PC-9 (cell line): ENCODE measurements at regions of chr6 and their contacts with region 1.

Region 1: DNA sequence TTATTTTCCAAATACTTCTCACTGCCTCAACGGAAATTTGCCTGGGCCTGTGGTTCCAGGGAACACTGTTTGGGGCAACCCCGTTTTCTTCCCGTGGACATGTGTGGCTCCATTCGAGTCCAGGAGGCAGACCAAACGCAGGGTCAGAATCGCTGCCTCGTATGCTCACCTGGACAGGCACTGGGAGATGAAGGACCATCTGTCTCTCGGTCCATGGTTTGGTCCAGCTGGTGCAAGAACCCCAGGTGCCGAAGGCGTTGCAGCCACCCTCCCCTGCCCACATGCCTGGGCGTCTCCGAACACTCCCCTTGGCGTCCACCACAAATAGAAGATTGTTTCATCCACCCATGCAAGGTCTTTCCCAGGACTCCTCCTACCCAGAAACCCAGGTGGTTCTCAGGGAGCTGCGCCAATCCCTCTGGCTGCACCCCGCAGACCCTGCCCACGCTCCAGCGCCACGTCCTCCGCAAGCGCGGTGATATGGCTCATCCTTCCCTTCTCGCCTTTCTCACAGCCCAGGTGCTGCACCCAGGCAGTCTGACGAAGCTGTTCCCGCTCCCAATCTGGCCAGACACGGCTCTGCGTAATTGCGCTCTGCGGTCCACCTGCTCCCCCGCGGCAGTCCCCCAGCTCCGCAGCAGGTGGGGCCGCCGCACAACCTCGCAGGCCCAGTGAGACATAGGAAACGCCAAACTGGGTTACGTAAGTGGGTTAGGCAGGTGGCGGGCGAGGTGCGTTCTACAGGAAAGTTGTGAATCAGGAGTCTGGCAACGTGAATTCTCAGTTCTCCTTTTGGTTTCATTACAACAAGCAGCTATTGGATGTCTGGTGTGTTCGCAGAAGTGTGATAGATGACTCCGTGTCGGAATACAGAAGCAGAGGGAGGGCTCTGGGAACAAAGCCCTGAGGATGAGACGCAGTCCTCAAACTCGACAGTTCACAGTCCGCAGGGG is 146.2 kb upstream of the ECI2 start:
- DNase-seq: peak; percentile 70 to 80
- H3K4me3 ChIP-seq: peak overlapping the region; percentile 54
- H3K27ac ChIP-seq: no peak overlapping the region
- H3K4me1 ChIP-seq: peaks cover 17% of the 10 kb centered on the region
- H3K27me3 ChIP-seq: no peaks in the 10 kb centered on the region
- CTCF ChIP-seq: peak; percentile 51

Region 2: DNA sequence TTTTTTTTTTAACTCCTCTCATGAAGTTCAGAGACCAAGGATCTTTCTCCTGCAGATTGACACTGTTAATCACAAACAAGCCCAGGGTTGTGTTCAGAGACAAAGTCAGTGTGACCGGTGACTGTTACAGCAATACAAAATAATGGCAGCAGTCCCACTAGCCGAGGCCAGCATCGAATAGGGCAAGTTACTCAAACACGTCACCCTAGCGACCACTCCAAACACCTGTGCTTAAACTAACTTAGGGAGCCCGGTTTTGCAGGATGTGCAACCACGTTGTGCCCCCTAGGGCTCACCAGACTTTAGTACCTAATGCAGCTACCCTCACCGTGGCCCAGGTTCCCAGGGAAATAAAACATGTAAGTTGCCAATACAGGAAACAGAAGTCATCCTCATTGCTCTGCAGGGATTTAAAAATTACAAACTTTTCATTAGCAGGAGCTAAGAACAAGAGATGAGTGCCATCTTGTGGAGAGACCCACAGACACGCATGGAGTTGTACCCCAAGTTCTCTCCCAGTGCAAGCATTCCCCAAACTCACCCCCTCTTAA is 394.4 kb before region 1 on chr6:
- CTCF ChIA-PET with region 1: no interaction called
- POLR2A ChIA-PET with region 1: no interaction called
- intact Hi-C with region 1: no loop called
- DNase-seq: peak; percentile 28 to 69
- H3K4me3 ChIP-seq: no peak overlapping the region
- H3K27ac ChIP-seq: no peak overlapping the region
- H3K4me1 ChIP-seq: peaks cover 40% of the 10 kb centered on the region
- H3K27me3 ChIP-seq: no peaks in the 10 kb centered on the region
- CTCF ChIP-seq: 0 out of 2 replicates have a peak, but pooled peaks have one; percentile 37

Region 3: GRCh38 chr6:4256965-4257364 is 24.7 kb before region 1 on chr6:
- CTCF ChIA-PET with region 1: no interaction called
- POLR2A ChIA-PET with region 1: no interaction called
- intact Hi-C with region 1: loop called (anchors 1 kb)
- DNase-seq: peak in 1 of 2 experiments; percentile 31
- H3K4me3 ChIP-seq: no peak overlapping the region
- H3K27ac ChIP-seq: no peak overlapping the region
- H3K4me1 ChIP-seq: no peaks in the 10 kb centered on the region
- H3K27me3 ChIP-seq: no peaks in the 10 kb centered on the region
- CTCF ChIP-seq: no peak

Region 4: GRCh38 chr6:4351520-4352315 is 70.1 kb after region 1 on chr6:
- CTCF ChIA-PET with region 1: no interaction called
- POLR2A ChIA-PET with region 1: interaction called, 12 read pairs
- intact Hi-C with region 1: no loop called
- DNase-seq: peak; percentile 69 to 77
- H3K4me3 ChIP-seq: peak overlapping the region; percentile 56; the same call in 1 of the 2 replicates
- H3K27ac ChIP-seq: peak overlapping the region; percentile 78
- H3K4me1 ChIP-seq: peaks cover 30% of the 10 kb centered on the region
- H3K27me3 ChIP-seq: no peaks in the 10 kb centered on the region
- CTCF ChIP-seq: no peak

Region 5: GRCh38 chr6:4647414-4648365 is 366.1 kb after region 1 on chr6:
- CTCF ChIA-PET with region 1: no interaction called
- POLR2A ChIA-PET with region 1: no interaction called
- intact Hi-C with region 1: no loop called
- DNase-seq: peak; percentile 40 to 69
- H3K4me3 ChIP-seq: peak overlapping the region; percentile 46
- H3K27ac ChIP-seq: no peak overlapping the region
- H3K4me1 ChIP-seq: peaks cover 14% of the 10 kb centered on the region; the same call in 1 of the 2 replicates
- H3K27me3 ChIP-seq: no peaks in the 10 kb centered on the region
- CTCF ChIP-seq: no peak

Region 6: DNA sequence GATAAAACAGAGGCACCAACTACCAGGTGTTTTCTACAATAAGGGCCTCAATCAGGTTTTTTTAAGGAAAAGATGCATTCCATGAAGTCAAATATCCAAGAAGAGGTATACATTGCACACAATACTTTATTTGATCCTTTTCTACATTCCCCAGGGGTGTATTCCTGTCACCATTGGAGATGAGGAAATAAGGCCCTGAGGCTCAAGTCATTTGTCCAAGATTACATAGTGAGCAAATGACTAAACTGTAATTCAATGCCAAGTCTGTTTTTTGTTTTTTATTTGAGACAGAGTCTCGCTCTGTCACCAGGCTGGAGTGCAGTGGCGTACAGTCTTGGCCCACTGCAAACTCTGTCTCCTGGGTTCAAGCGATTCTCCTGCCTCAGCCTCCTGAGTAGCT is 425.4 kb after region 1 on chr6:
- CTCF ChIA-PET with region 1: no interaction called
- POLR2A ChIA-PET with region 1: no interaction called
- intact Hi-C with region 1: loop called (anchors 1 kb)
- DNase-seq: peak; percentile 56 to 88
- H3K4me3 ChIP-seq: no peak overlapping the region
- H3K27ac ChIP-seq: peak overlapping the region; percentile 34; the same call in 1 of the 2 replicates
- H3K4me1 ChIP-seq: peaks cover 11% of the 10 kb centered on the region
- H3K27me3 ChIP-seq: no peaks in the 10 kb centered on the region
- CTCF ChIP-seq: no peak

Region 7: DNA sequence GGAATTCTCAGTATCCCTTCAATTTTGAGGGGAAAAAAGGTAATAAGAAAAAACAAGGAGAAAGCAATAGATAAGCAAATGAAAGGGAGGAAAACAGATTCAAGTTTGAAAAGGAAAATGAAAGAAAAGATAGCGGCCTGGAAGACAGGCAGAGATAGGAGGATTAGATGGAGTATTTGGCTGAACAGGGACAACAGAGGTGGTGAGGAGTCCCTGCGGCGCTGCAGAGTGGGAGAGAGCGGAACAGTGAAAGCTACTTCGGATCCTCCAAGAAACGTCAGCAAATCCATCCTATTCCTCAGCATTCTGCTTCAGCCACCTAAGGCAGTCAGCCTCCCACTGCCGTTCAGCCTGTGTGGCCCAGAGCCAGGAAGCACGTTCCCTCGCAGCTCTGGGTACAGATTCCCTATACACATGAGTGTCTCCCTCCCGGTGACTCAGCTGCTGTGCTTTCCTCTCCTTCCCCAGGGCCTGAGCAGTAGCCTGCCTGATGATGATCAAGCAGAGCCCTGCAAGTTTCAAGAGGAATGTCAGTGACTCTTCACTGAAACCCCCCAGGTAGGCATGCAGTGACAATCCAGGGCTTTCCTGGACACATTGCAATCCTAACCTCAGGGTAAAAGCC is 451.2 kb after region 1 on chr6:
- CTCF ChIA-PET with region 1: interaction called, 6 read pairs
- POLR2A ChIA-PET with region 1: no interaction called
- intact Hi-C with region 1: loop called (anchors 10 kb)
- DNase-seq: peak; percentile 84
- H3K4me3 ChIP-seq: peak overlapping the region; percentile 12; the same call in 1 of the 2 replicates
- H3K27ac ChIP-seq: peak overlapping the region; percentile 91
- H3K4me1 ChIP-seq: peaks cover 38% of the 10 kb centered on the region
- H3K27me3 ChIP-seq: no peaks in the 10 kb centered on the region
- CTCF ChIP-seq: no peak